PC-3 (cell line): ENCODE measurements at regions of chr7 and their contacts with region 1.

Region 1: GRCh38 chr7:132318352-132319318 is 257.6 kb downstream of the PLXNA4 start:
- DNase-seq: peak; percentile 79
- ATAC-seq: peak; percentile 94
- H3K4me3 ChIP-seq: peak overlapping the region; percentile 11; the same call in 1 of the 2 replicates
- H3K27ac ChIP-seq: no peak overlapping the region
- H3K4me1 ChIP-seq: peaks cover 5% of the 10 kb centered on the region; the same call in 1 of the 2 replicates
- H3K27me3 ChIP-seq: no peaks in the 10 kb centered on the region
- CTCF ChIP-seq: peak; percentile 89

Region 2: DNA sequence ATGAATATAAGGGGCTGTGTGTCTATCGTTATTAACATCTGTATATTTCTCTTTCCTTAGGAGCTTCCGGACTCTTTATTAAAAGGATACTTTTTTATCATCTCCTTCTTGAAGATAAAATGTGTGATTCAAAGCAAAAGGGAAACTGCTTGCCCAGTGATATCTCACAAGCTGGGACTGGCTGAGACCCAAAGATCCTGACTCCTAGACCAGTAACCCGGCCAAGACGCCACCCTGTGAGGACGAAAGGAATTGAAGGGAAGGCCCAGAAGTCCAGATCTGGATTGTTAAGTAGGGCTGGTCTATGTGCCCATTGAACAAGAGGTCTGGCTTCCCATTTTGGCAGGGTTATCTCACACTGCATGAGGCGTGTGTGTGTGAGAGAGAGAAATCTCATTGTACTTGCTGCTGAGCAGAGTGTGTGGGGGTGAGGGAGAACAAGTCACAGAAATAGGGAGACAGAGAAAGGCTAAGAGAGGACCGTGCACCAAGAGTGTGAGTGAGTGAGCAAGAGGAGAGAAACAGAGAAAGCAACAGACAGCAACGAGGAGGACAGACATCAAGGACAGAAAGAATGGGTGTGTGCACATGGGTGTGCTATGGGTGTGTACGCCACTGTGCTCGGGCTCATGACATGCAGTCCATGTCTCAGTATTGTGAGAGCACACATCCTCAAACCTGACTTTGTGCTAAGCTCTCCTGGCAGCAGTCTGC is 182.2 kb after region 1 on chr7:
- CTCF ChIA-PET with region 1: no interaction called
- POLR2A ChIA-PET with region 1: no interaction called
- intact Hi-C with region 1: loop called (anchors 2 kb)
- DNase-seq: peak; percentile 47
- ATAC-seq: peak; percentile 70
- H3K4me3 ChIP-seq: no peak overlapping the region
- H3K27ac ChIP-seq: no peak overlapping the region
- H3K4me1 ChIP-seq: no peaks in the 10 kb centered on the region
- H3K27me3 ChIP-seq: no peaks in the 10 kb centered on the region
- CTCF ChIP-seq: peak; percentile 57

Region 3: GRCh38 chr7:132580717-132581285 is 262.2 kb after region 1 on chr7:
- CTCF ChIA-PET with region 1: interaction called, 12 read pairs
- POLR2A ChIA-PET with region 1: no interaction called
- intact Hi-C with region 1: loop called (anchors 1 kb)
- DNase-seq: peak; percentile 71
- ATAC-seq: peak; percentile 77
- H3K4me3 ChIP-seq: no peak overlapping the region
- H3K27ac ChIP-seq: no peak overlapping the region
- H3K4me1 ChIP-seq: peaks cover 4% of the 10 kb centered on the region; the same call in 1 of the 2 replicates
- H3K27me3 ChIP-seq: peaks cover 20% of the 10 kb centered on the region
- CTCF ChIP-seq: peak; percentile 87

Region 4: GRCh38 chr7:132697003-132697402 is 378.4 kb after region 1 on chr7:
- CTCF ChIA-PET with region 1: no interaction called
- POLR2A ChIA-PET with region 1: no interaction called
- intact Hi-C with region 1: no loop called
- DNase-seq: no peak
- ATAC-seq: no peak
- H3K4me3 ChIP-seq: no peak overlapping the region
- H3K27ac ChIP-seq: no peak overlapping the region
- H3K4me1 ChIP-seq: no peaks in the 10 kb centered on the region
- H3K27me3 ChIP-seq: peaks cover 23% of the 10 kb centered on the region
- CTCF ChIP-seq: no peak